CD4-positive, alpha-beta T cell (primary cell): ENCODE measurements at regions of chr5 and their contacts with region 1.

Region 1: DNA sequence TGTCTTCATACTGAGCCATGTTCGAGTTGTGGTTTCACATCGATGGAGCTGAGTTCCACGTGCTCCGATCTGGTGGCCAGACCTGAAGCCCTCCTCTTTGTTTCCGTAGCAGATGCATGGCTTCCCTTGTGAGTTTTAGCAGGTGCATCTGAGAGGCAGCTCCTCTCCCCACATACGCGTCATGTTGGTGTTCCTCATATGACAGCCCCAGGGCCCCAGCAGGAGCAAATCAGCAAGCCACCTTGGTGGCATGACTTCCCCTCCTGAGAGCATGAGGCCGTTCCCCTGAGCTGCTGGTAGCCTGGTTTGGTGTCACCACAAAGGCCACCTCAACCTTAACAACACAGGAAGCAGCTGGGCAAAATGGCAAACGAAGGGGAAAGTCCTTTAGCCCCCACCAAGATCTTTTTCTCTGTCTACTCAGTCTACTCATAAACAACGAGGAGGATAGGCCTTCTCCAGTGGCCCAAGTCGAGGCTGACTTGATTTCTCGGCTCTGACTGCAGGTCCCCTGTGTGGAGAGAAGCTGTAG is 5.9 kb downstream of the CYFIP2 start:
- DNase-seq: peak; percentile 74 to 97 (median 80)
- ATAC-seq: peak; percentile 90
- H3K4me3 ChIP-seq: peak overlapping the region; percentile 8
- H3K4me3 Mint-ChIP-seq: peak overlapping the region; percentile 80
- H3K27ac ChIP-seq: peak overlapping the region; percentile 81 to 94
- H3K27ac Mint-ChIP-seq: peak overlapping the region; percentile 93
- H3K4me1 ChIP-seq: peaks cover 74% of the 10 kb centered on the region
- H3K4me1 Mint-ChIP-seq: peaks cover 96% of the 10 kb centered on the region
- H3K27me3 ChIP-seq: no peaks in the 10 kb centered on the region
- H3K27me3 Mint-ChIP-seq: no peaks in the 10 kb centered on the region
- CTCF ChIP-seq: no peak

Region 2: GRCh38 chr5:157172403-157172802 is 99.4 kb before region 1 on chr5:
- CTCF ChIA-PET with region 1: no interaction called
- POLR2A ChIA-PET with region 1: interaction called, 11 read pairs
- intact Hi-C with region 1: no loop called
- DNase-seq: peak in 13 of 14 experiments; percentile 39 to 94 (median 58)
- ATAC-seq: peak; percentile 97
- H3K4me3 ChIP-seq: peak overlapping the region; percentile 27
- H3K4me3 Mint-ChIP-seq: peak overlapping the region; percentile 58
- H3K27ac ChIP-seq: peak overlapping the region; percentile 77 to 83
- H3K27ac Mint-ChIP-seq: peak overlapping the region; percentile 85
- H3K4me1 ChIP-seq: peaks cover 59% of the 10 kb centered on the region
- H3K4me1 Mint-ChIP-seq: peaks cover 76% of the 10 kb centered on the region
- H3K27me3 ChIP-seq: no peaks in the 10 kb centered on the region
- H3K27me3 Mint-ChIP-seq: no peaks in the 10 kb centered on the region
- CTCF ChIP-seq: no peak

Region 3: DNA sequence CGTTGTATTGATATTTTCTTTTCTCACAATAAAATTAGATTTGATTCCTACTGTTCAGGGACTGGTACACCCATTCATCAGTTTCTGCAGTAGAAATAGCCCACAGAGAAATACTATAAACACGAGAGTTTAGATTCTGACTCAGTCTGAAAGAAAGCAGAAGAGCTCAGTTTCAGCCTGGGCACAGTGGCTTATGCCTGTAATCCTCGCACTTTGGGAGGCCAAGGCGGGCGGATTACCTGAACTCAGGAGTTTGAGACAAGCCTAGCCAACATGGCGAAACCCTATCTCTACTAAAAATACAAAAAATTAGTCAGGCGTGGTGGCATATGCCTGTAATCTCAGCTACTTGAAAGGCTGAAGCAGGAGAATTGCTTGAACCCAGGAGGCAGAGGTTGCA is 82.6 kb before region 1 on chr5:
- CTCF ChIA-PET with region 1: interaction called, 4 read pairs
- POLR2A ChIA-PET with region 1: interaction called, 22 read pairs
- intact Hi-C with region 1: loop called in 1 of 2 experiments (anchors 2 kb)
- DNase-seq: peak in 1 of 14 experiments; percentile 42
- ATAC-seq: no peak
- H3K4me3 ChIP-seq: peak overlapping the region; percentile 85
- H3K4me3 Mint-ChIP-seq: peak overlapping the region; percentile 92
- H3K27ac ChIP-seq: peak overlapping the region; percentile 38 to 67
- H3K27ac Mint-ChIP-seq: peak overlapping the region; percentile 96
- H3K4me1 ChIP-seq: peaks cover 72% of the 10 kb centered on the region
- H3K4me1 Mint-ChIP-seq: peaks cover 92% of the 10 kb centered on the region
- H3K27me3 ChIP-seq: no peaks in the 10 kb centered on the region
- H3K27me3 Mint-ChIP-seq: no peaks in the 10 kb centered on the region
- CTCF ChIP-seq: no peak

Region 4: DNA sequence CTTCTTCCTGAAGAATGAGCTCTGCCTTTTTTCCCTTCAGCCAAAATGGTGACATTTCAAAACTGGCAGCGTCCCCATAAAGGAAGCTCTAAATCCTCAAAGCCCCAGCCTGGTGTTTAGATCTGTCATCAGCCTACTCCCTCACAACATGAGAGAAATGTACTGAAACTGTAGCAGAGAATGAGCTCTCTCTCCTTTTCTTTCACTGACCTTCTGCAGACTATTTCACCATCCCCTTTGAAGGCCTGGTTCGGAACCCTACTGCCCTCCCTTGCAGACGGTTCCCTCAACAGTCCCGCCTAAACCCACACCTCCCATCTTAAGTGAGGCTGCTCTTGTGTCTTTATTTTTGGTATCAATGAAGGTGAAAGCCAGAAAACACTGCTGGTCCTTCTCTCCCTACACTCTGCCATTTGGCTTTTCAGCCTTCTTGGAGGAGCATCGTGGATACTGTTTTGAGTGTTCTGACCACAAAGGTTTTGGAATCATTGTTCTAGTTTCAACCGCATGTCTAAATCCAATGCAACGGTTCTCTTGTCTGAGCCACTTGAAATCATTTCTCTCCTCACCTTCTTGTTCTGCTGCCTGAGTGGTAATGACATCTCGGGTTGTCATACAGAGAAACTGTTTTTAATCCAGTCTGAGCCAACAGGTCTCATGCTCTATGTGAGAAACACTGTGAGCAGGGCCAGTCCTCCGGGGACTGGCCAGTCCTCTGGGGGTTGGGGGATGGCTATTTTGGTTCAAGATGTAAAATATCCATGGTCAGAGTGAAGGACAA is 52.1 kb before region 1 on chr5:
- CTCF ChIA-PET with region 1: no interaction called
- POLR2A ChIA-PET with region 1: interaction called, 10 read pairs
- intact Hi-C with region 1: no loop called
- DNase-seq: no peak
- ATAC-seq: no peak
- H3K4me3 ChIP-seq: no peak overlapping the region
- H3K4me3 Mint-ChIP-seq: peak overlapping the region; percentile 27
- H3K27ac ChIP-seq: peak overlapping the region; percentile 70 to 72
- H3K27ac Mint-ChIP-seq: peak overlapping the region; percentile 80
- H3K4me1 ChIP-seq: peaks cover 99% of the 10 kb centered on the region
- H3K4me1 Mint-ChIP-seq: peaks cover 85% of the 10 kb centered on the region
- H3K27me3 ChIP-seq: no peaks in the 10 kb centered on the region
- H3K27me3 Mint-ChIP-seq: no peaks in the 10 kb centered on the region
- CTCF ChIP-seq: no peak

Region 5: GRCh38 chr5:157233515-157233914 is 38.3 kb before region 1 on chr5:
- CTCF ChIA-PET with region 1: no interaction called
- POLR2A ChIA-PET with region 1: interaction called, 10 read pairs
- intact Hi-C with region 1: loop called in 1 of 2 experiments (anchors 1 kb)
- DNase-seq: peak in 4 of 14 experiments; percentile 32 to 87 (median 77)
- ATAC-seq: peak; percentile 93
- H3K4me3 ChIP-seq: no peak overlapping the region
- H3K4me3 Mint-ChIP-seq: no peak overlapping the region
- H3K27ac ChIP-seq: peak overlapping the region in 1 of 2 donors; percentile 28
- H3K27ac Mint-ChIP-seq: peak overlapping the region; percentile 79
- H3K4me1 ChIP-seq: peaks cover 27% of the 10 kb centered on the region
- H3K4me1 Mint-ChIP-seq: peaks cover 64% of the 10 kb centered on the region
- H3K27me3 ChIP-seq: no peaks in the 10 kb centered on the region
- H3K27me3 Mint-ChIP-seq: no peaks in the 10 kb centered on the region
- CTCF ChIP-seq: no peak

Region 6: DNA sequence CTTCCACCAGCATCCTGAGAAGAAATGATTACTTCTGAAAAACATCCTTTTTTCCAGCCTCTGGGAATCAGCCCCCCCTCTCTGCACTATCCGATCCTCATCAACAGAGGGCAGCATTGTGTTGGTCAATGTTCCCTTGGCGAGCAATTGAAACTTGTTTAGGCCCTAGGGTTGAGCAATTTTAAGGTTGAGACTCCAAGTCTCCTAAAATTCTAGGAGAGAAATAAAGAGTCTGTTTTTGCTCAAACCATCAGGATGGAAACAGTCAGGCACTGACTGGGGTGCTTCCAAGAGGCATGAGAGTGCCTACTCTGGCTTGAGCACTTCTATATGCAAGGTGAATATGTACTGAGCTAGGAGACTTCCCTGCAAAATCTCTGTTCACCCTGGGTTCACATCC is 18.3 kb before region 1 on chr5:
- CTCF ChIA-PET with region 1: interaction called, 7 read pairs
- POLR2A ChIA-PET with region 1: interaction called, 123 read pairs
- intact Hi-C with region 1: loop called (anchors 2 kb)
- DNase-seq: peak in 2 of 14 experiments; percentile 30 to 66
- ATAC-seq: no peak
- H3K4me3 ChIP-seq: no peak overlapping the region
- H3K4me3 Mint-ChIP-seq: peak overlapping the region; percentile 74
- H3K27ac ChIP-seq: peak overlapping the region; percentile 46 to 73
- H3K27ac Mint-ChIP-seq: peak overlapping the region; percentile 91
- H3K4me1 ChIP-seq: peaks cover 76% of the 10 kb centered on the region
- H3K4me1 Mint-ChIP-seq: peaks cover 97% of the 10 kb centered on the region
- H3K27me3 ChIP-seq: no peaks in the 10 kb centered on the region
- H3K27me3 Mint-ChIP-seq: no peaks in the 10 kb centered on the region
- CTCF ChIP-seq: peak; percentile 73

Region 7: DNA sequence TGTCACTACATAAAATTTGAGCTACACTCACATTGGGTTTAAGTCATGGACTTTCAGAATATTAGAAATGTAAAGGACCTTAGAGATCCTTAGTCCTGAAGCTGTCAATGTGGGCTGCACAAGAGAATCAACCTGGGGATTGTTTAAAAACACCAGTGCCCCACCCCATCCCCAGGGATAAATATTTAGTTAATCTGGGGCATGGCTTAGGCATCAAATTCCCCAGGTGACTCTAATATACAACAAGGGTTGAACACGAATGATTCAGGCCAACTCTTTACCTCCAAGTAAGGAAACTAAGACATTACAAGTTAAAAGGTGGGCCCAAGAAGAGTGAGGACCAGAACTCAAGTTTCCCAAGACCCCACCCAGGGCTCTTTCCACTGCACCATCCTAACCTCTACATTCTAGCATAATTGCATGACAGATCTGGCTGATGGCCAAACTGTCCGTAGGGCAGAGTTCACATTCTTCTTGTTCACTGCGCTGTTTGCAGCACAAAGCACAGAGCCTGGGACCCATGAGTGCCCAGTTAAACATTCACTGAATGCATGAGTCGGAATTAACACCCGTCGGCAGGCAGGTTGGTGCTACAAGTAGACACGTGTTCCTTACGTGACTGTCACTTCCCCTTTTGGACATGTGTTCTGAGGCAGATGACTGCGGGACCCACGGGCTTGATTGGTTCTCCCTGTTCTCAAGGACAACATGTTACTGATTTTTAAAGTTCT is 19.3 kb after region 1 on chr5:
- CTCF ChIA-PET with region 1: interaction called, 8 read pairs
- POLR2A ChIA-PET with region 1: interaction called, 48 read pairs
- intact Hi-C with region 1: loop called in 1 of 2 experiments (anchors 2 kb)
- DNase-seq: peak in 3 of 14 experiments; percentile 23 to 56 (median 38)
- ATAC-seq: no peak
- H3K4me3 ChIP-seq: no peak overlapping the region
- H3K4me3 Mint-ChIP-seq: no peak overlapping the region
- H3K27ac ChIP-seq: peak overlapping the region in 1 of 2 donors; percentile 29
- H3K27ac Mint-ChIP-seq: peak overlapping the region; percentile 87
- H3K4me1 ChIP-seq: peaks cover 48% of the 10 kb centered on the region
- H3K4me1 Mint-ChIP-seq: peaks cover 75% of the 10 kb centered on the region
- H3K27me3 ChIP-seq: no peaks in the 10 kb centered on the region
- H3K27me3 Mint-ChIP-seq: no peaks in the 10 kb centered on the region
- CTCF ChIP-seq: no peak